ENCODE measurements at regions of chr19 and their contacts with region 1.

Region 1: GRCh38 chr19:3035542-3036118 is 6.5 kb upstream of the TLE2 start:
- DNase-seq: peak; percentile 100
- H3K4me3 Mint-ChIP-seq: peak overlapping the region; percentile 84
- H3K27ac Mint-ChIP-seq: peak overlapping the region; percentile 93
- H3K4me1 Mint-ChIP-seq: peaks cover 28% of the 10 kb centered on the region
- H3K27me3 Mint-ChIP-seq: no peaks in the 10 kb centered on the region
- CTCF ChIP-seq: no peak

Region 2: DNA sequence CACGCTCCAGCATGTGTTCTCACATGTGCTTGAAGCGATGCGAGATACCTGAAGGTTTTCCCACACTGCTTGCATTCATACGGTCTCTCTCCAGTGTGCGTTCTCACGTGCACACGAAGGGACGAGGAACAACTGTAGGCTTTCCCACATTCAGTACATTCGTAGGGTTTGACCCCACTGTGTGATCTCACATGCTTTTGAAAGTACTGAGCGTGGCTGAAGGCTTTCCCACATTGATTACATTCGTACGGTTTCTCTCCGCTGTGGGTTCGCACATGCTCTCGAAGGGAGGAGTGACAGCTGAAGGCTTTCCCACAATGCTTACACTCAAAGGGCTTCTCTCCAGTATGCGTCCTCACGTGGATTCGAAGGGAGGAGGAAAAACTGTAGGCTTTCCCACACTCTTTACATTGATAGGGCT is 102.1 kb before region 1 on chr19:
- CTCF ChIA-PET with region 1: no interaction called
- POLR2A ChIA-PET with region 1: no interaction called
- intact Hi-C with region 1: no loop called
- DNase-seq: no peak
- H3K4me3 Mint-ChIP-seq: no peak overlapping the region
- H3K27ac Mint-ChIP-seq: no peak overlapping the region
- H3K4me1 Mint-ChIP-seq: no peaks in the 10 kb centered on the region
- H3K27me3 Mint-ChIP-seq: no peaks in the 10 kb centered on the region
- CTCF ChIP-seq: no peak

Region 3: GRCh38 chr19:2977001-2977685 is 58.5 kb before region 1 on chr19 and contains the start of gene TLE6:
- CTCF ChIA-PET with region 1: no interaction called
- POLR2A ChIA-PET with region 1: interaction called, 9 read pairs
- intact Hi-C with region 1: loop called (anchors 10 kb)
- DNase-seq: peak; percentile 96
- H3K4me3 Mint-ChIP-seq: peak within 1 kb of the TSS; percentile 78
- H3K27ac Mint-ChIP-seq: no peak within 1 kb of the TSS
- H3K4me1 Mint-ChIP-seq: peaks cover 23% of the 10 kb centered on the region
- H3K27me3 Mint-ChIP-seq: no peaks in the 10 kb centered on the region
- CTCF ChIP-seq: no peak
- total RNA-seq, gene TLE6: 0.89 and 2.9 TPM in 2 replicates

Region 4: GRCh38 chr19:3057306-3057714 is 21.7 kb after region 1 on chr19:
- CTCF ChIA-PET with region 1: no interaction called
- POLR2A ChIA-PET with region 1: interaction called, 56 read pairs
- intact Hi-C with region 1: no loop called
- DNase-seq: peak; percentile 93
- H3K4me3 Mint-ChIP-seq: peak overlapping the region; percentile 65
- H3K27ac Mint-ChIP-seq: peak overlapping the region; percentile 46
- H3K4me1 Mint-ChIP-seq: peaks cover 39% of the 10 kb centered on the region
- H3K27me3 Mint-ChIP-seq: no peaks in the 10 kb centered on the region
- CTCF ChIP-seq: no peak

Region 5: GRCh38 chr19:3062168-3063102 is 26.8 kb after region 1 on chr19 and contains the start of gene TLE5:
- CTCF ChIA-PET with region 1: no interaction called
- POLR2A ChIA-PET with region 1: interaction called, 56 read pairs
- intact Hi-C with region 1: no loop called
- DNase-seq: peak; percentile 55
- H3K4me3 Mint-ChIP-seq: peak within 1 kb of the TSS; percentile 71
- H3K27ac Mint-ChIP-seq: peak within 1 kb of the TSS; percentile 78
- H3K4me1 Mint-ChIP-seq: peaks cover 9% of the 10 kb centered on the region
- H3K27me3 Mint-ChIP-seq: no peaks in the 10 kb centered on the region
- CTCF ChIP-seq: no peak
- total RNA-seq, gene TLE5: 266 and 273 TPM in 2 replicates

Region 6: DNA sequence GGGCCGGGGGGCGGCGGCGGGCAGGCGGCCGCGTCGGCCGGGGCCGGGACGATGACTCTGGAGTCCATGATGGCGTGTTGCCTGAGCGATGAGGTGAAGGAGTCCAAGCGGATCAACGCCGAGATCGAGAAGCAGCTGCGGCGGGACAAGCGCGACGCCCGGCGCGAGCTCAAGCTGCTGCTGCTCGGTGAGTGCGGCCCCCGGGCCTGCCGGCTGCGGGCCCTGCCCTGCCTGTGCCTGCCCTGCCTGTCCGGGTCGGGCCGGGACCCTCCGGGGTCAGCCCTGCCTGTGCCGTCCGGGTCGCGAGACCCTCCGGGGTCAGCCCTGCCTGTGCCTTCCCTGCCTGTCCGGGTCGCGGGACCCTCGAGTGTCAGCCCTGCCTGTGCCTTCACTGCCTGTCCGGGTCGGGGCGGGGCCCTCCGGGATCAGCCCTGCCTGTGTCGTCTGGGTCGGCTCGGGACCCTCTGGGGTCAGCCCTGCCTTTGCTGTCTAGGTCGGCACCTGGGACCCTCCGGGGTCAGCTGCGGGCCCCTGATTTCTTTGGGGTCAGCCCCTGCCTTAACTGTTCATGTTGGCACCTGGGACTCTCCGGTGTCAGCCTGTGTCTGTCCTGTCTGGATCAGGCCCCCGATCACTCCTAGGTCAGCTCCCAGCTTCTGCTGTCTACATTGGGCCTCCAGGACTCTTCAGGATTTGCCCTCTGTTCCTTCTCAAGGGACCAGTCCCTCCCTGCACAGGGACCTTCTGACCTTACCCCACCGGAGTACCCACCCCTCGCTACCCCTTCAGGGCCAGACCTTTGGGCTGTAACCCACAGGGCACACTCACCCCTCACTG is 59.2 kb after region 1 on chr19:
- CTCF ChIA-PET with region 1: no interaction called
- POLR2A ChIA-PET with region 1: interaction called, 13 read pairs
- intact Hi-C with region 1: no loop called
- DNase-seq: peak; percentile 25
- H3K4me3 Mint-ChIP-seq: peak overlapping the region; percentile 93
- H3K27ac Mint-ChIP-seq: peak overlapping the region; percentile 88
- H3K4me1 Mint-ChIP-seq: peaks cover 24% of the 10 kb centered on the region
- H3K27me3 Mint-ChIP-seq: no peaks in the 10 kb centered on the region
- CTCF ChIP-seq: no peak

Measured in MCF 10A (cell line).